Sciatic nerve (tissue), 2 donors: ENCODE measurements at regions of chr2 and their contacts with region 1.

Region 1: DNA sequence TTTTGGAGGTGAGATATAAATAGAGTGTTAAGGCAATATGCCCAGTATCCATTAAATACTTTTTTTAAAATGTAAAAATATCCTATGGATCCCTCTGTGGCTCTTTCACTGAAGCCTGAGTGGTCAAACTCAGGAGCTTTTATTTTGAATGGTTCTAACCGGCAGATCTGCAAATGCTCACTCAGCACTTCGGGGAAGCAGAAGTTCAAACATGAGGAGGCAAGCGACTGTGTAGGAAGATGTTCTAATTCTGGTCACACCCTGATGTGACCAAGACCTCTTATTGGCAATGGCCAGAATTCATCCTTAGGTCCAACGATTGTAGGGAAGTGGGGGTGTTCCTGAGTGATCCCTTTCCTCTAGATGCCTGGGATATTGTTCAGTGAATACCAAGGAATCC is 168.8 kb downstream of the CDCA7 start:
- DNase-seq: no peak
- ATAC-seq: peak; percentile 69

Region 2: DNA sequence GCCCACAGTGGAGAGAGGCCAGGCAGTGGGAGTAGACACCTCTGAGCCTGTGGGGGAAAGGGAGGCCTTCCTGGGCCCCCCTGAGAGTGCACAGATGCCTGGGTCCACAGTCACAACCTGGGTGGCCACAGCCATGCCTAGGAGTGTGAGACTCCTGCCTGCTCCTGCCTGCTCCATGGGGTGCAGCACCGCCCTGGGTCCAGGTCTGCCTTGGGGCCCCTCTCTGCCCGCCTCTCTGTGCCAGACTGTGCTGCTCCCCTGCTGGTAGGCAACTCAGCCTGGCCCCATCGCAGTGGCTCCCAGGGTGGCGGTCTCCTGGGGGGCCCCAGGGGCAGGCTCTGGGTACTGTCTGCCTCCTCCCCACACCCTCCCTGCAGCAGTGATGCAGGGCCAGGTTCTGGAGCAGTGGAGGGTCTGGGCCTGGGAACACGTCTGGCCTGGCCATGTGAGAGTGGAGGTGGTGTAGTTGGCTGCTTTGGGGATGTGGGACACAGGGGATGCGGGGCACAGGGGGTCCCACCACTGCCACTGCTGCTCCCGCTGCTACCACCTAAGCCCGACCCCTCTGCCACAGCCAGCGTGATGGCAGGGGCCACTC is 1360.7 kb before region 1 on chr2:
- intact Hi-C with region 1: loop called (anchors 5 kb)
- DNase-seq: no peak
- ATAC-seq: peak; percentile 36